ENCODE measurements at regions of chr9 and their contacts with region 1.

Region 1: DNA sequence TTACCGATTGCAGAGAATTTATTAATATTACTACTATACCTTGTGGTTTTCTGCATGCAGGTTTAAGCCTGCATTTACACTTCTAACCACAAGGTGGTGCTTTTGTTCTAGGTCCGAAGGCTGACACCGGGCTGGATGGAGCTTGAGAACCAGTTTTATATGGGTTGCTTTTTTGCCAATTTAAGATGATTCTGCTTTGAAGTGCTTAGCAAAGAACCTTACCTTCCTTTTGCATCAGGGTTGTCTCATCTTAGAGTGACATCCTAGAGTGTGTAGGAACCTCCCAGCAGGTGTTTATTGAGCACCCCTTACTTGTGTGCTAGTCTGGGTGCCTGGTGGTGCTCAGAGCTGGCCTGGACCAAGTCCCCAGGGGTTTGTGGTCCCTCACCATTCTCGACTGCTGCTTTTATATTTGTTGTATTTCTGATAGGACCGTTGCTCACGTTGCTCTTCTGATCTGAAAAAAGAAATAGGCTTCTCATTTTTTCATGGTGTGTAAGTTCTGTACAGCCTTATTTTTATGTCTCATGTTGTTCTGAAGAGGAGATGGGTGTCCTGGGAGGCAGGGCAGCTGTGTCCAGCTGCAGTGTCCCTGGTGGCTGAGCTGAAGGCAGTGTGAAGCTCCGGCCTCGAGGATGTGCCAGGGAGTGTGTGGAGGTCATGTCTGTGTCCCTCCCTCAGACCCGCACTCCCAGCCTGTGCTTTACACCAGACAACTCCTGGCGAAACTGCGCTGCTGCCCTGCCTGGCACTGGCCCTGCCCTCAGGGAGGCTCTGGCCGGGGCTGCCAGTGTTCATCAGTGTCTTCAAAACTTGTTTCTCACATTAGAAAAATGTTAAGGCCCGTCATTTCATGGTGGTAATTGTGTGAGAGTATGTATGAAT is 54.3 kb downstream of the EHMT1 start:
- DNase-seq: peak; percentile 64 to 85 (median 82)
- H3K4me3 ChIP-seq: no peak overlapping the region
- H3K27ac ChIP-seq: no peak overlapping the region
- H3K4me1 ChIP-seq: peaks cover 0 to 37% (median 23%) of the 10 kb centered on the region in 4 experiments
- H3K27me3 ChIP-seq: no peaks in the 10 kb centered on the region

Region 2: DNA sequence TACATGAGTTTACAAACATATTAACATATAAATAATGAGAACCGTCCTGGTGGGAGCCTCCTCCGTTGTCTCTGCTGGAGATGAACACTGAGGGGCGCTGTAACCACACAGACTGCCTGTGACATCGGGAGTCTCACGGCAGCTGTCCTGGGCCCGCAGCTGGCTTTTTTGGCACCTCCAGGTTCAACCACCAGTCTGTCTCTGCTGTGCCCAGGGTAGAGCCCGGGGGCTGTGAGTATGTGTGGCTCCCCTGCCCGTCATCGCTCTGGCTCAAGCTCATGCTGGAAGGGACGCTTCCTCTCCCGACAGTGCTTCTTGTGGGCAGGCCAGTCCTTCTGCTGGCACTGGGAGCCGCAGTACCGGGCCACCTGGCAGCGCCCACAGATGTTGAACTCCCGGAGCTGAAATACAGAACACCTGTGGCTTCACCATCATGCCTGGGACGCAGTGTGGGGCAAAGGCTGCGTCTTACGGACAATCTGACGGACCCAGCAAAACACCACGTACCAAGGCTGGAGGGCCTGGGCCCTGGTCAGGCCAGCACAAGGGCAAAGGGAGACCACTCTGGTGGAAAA is 90.8 kb before region 1 on chr9:
- CTCF ChIA-PET with region 1: interaction called, 12 read pairs
- POLR2A ChIA-PET with region 1: no interaction called
- DNase-seq: peak; percentile 32 to 63 (median 60)
- H3K4me3 ChIP-seq: no peak overlapping the region
- H3K27ac ChIP-seq: no peak overlapping the region
- H3K4me1 ChIP-seq: peaks cover 4 to 15% (median 12%) of the 10 kb centered on the region in 4 experiments
- H3K27me3 ChIP-seq: no peaks in the 10 kb centered on the region

Region 3: DNA sequence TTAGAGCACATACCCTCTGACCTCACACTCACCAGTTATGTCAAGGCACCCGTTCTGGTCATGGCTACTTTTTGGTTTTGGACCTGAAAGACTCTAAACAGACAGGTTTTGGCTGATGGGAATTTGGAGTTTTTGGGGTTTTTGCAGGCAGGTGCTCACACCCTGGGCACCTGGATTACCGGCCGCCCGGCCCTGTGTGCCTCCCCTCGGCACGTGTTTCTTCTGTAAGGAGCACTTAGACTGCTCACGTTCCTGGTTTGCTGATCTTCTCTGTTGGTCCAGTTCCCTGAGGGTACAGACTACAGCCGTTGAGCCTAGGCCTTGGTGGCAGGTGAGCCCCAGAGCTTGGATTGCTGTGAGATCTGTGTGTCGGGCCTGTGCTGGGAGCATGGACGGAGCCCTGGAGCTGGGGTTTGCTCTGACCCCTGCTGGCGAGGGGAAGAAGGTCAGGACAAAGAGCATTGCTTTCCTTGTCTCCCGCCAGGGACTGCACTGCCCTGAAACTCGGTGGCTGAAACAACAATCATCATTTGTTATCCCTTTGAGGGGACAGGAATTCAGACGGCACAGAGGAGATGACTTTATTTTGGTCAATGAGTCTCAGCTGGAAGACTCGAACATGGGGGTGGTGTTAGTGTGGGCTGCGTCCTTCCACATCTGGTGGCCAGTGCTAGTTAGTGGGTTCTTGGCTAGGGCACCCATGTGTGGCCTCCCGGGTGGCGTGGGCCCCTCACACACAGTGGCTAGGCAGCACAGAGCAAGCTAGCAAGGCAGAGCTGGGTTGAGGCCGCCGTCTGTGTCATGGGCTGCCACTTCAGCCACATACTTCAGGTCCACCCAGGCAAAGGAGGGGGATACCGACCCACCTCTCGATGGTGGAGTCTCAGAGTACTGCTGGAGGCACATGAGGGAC is 22.1 kb after region 1 on chr9:
- CTCF ChIA-PET with region 1: interaction called, 117 read pairs
- POLR2A ChIA-PET with region 1: no interaction called
- DNase-seq: peak; percentile 65 to 72 (median 68)
- H3K4me3 ChIP-seq: no peak overlapping the region
- H3K27ac ChIP-seq: peak overlapping the region in 1 of 2 experiments; percentile 43
- H3K4me1 ChIP-seq: peaks cover 3 to 32% (median 29%) of the 10 kb centered on the region in 4 experiments
- H3K27me3 ChIP-seq: no peaks in the 10 kb centered on the region

Region 4: DNA sequence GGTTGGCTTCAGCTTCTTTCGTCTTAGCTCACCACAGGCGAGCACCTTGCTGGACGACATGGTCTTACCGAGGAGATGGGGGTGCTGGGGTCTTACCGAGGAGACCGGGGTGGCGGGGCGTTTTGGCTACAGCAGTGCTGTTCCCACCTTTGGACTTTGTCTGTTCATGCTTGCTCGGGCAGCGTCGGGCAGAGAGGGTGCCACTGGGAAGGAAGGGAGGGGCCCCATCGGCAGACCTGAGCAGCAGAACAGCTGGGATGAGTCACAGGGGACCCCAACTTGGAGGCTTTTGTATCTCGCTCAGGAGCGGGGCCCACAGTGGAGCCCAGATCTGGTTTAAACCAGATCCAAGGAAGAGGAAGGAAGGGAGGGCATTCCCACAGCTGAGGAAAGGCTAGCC is 98.4 kb after region 1 on chr9:
- CTCF ChIA-PET with region 1: no interaction called
- POLR2A ChIA-PET with region 1: no interaction called
- DNase-seq: no peak
- H3K4me3 ChIP-seq: no peak overlapping the region
- H3K27ac ChIP-seq: no peak overlapping the region
- H3K4me1 ChIP-seq: no peaks in the 10 kb centered on the region
- H3K27me3 ChIP-seq: no peaks in the 10 kb centered on the region

Measured in common myeloid progenitor, CD34-positive (primary cell).